ENCODE measurements at regions of chr5 and their contacts with region 1.

Region 1: GRCh38 chr5:96934708-96935558 is 947 bp upstream of the LNPEP start:
- DNase-seq: peak; percentile 98 to 99 (median 99)
- H3K4me3 ChIP-seq: peak overlapping the region; percentile 81 to 99 (median 93)
- H3K27ac ChIP-seq: peak overlapping the region; percentile 85 to 92
- H3K4me1 ChIP-seq: peaks cover 30 to 68% (median 45%) of the 10 kb centered on the region in 4 experiments
- H3K27me3 ChIP-seq: no peaks in the 10 kb centered on the region

Region 2: GRCh38 chr5:96807075-96807654 is 127.8 kb before region 1 on chr5:
- CTCF ChIA-PET with region 1: interaction called, 3 read pairs
- POLR2A ChIA-PET with region 1: interaction called, 10 read pairs
- DNase-seq: peak; percentile 59 to 79 (median 70)
- H3K4me3 ChIP-seq: peak overlapping the region; percentile 67 to 98 (median 81)
- H3K27ac ChIP-seq: peak overlapping the region; percentile 90 to 97
- H3K4me1 ChIP-seq: peaks cover 9 to 30% (median 18%) of the 10 kb centered on the region in 4 experiments
- H3K27me3 ChIP-seq: no peaks in the 10 kb centered on the region

Region 3: DNA sequence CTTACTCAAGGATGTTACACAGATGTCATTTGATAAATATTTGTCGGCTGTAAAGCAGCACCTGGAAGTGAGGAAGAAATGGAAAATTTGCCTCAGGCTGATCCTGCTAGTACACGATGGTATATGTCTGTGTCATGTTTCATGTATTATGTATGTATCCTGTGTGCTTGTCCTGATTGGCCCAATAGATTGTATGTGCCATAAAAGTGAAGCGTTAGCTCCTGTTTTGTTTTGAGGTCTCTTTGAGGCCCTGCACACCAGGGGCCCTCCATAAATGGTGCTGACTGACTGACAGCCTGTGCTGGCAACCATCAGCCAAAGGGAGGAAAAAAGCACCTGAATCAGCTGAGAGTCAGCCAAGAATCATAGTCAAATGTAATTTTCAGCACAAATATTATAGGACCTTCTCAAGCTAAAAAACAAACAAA is 10.9 kb before region 1 on chr5:
- CTCF ChIA-PET with region 1: interaction called, 17 read pairs
- POLR2A ChIA-PET with region 1: interaction called, 3 read pairs
- DNase-seq: no peak
- H3K4me3 ChIP-seq: no peak overlapping the region
- H3K27ac ChIP-seq: no peak overlapping the region
- H3K4me1 ChIP-seq: peaks cover 9 to 34% (median 25%) of the 10 kb centered on the region in 4 experiments
- H3K27me3 ChIP-seq: no peaks in the 10 kb centered on the region

Region 4: DNA sequence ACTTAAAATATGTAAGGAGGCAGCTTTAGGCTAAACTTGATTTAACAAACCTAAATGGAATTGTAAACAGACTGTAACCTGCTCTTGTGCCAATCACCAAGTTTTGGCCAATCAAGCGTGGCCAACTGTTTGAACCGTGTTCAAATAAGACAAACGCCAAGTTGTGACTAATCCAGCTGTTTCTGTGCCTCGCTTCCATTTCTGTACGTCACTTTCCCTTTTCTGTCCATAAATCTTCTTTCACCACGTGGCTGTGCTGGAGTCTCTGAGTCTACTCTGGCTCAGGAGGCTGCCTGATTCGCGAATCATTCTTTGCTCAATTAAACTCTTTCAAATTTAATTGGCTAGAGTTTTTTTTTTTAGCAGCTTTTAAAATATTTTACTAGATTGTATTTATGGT is 136.2 kb after region 1 on chr5:
- CTCF ChIA-PET with region 1: no interaction called
- POLR2A ChIA-PET with region 1: no interaction called
- DNase-seq: peak; percentile 22 to 71 (median 41)
- H3K4me3 ChIP-seq: no peak overlapping the region
- H3K27ac ChIP-seq: no peak overlapping the region
- H3K4me1 ChIP-seq: peaks cover 0 to 9% (median 2%) of the 10 kb centered on the region in 4 experiments
- H3K27me3 ChIP-seq: no peaks in the 10 kb centered on the region

Measured in common myeloid progenitor, CD34-positive (primary cell).